CD8-positive, alpha-beta T cell (primary cell): ENCODE measurements at regions of chr7 and their contacts with region 1.

Region 1: GRCh38 chr7:143901668-143902331 is at the start of gene TCAF1:
- DNase-seq: peak; percentile 70 to 94 (median 88)
- ATAC-seq: peak; percentile 92
- H3K4me3 ChIP-seq: peak within 1 kb of the TSS; percentile 83 to 92
- H3K4me3 Mint-ChIP-seq: peak within 1 kb of the TSS; percentile 90
- H3K27ac ChIP-seq: peak within 1 kb of the TSS; percentile 65 to 67
- H3K27ac Mint-ChIP-seq: peak within 1 kb of the TSS; percentile 94
- H3K4me1 ChIP-seq: peaks cover 19% of the 10 kb centered on the region
- H3K4me1 Mint-ChIP-seq: peaks cover 45% of the 10 kb centered on the region
- H3K27me3 ChIP-seq: no peaks in the 10 kb centered on the region
- H3K27me3 Mint-ChIP-seq: no peaks in the 10 kb centered on the region
- CTCF ChIP-seq: no peak
- total RNA-seq, gene TCAF1: 4.8 to 5.0 TPM

Region 2: GRCh38 chr7:143733876-143734275 is 167.9 kb before region 1 on chr7:
- CTCF ChIA-PET with region 1: no interaction called
- POLR2A ChIA-PET with region 1: no interaction called
- intact Hi-C with region 1: loop called (anchors 5 kb)
- DNase-seq: no peak
- ATAC-seq: no peak
- H3K4me3 ChIP-seq: no peak overlapping the region
- H3K4me3 Mint-ChIP-seq: no peak overlapping the region
- H3K27ac ChIP-seq: no peak overlapping the region
- H3K27ac Mint-ChIP-seq: no peak overlapping the region
- H3K4me1 ChIP-seq: no peaks in the 10 kb centered on the region
- H3K4me1 Mint-ChIP-seq: peaks cover 6% of the 10 kb centered on the region
- H3K27me3 ChIP-seq: no peaks in the 10 kb centered on the region
- H3K27me3 Mint-ChIP-seq: no peaks in the 10 kb centered on the region
- CTCF ChIP-seq: no peak

Region 3: DNA sequence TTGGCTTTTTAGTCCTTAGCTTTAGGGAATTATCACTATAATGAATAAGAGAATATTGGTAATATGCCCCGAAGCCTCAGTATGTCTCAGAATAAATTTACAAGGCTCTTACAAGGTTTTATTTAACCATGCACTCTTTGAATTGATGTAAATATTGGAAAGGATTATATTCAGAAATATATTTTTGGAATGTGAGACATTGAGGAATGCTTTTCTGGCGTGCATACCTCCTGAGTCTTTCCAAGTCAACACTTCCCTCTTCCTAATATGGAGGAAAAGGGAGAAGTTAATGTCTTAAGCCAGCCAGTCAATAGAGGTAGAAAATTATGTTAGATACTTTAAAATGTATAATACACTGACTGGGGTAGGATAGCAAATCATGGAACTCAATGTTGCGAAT is 51.6 kb after region 1 on chr7:
- CTCF ChIA-PET with region 1: no interaction called
- POLR2A ChIA-PET with region 1: no interaction called
- intact Hi-C with region 1: no loop called
- DNase-seq: no peak
- ATAC-seq: no peak
- H3K4me3 ChIP-seq: no peak overlapping the region
- H3K4me3 Mint-ChIP-seq: no peak overlapping the region
- H3K27ac ChIP-seq: no peak overlapping the region
- H3K27ac Mint-ChIP-seq: no peak overlapping the region
- H3K4me1 ChIP-seq: no peaks in the 10 kb centered on the region
- H3K4me1 Mint-ChIP-seq: no peaks in the 10 kb centered on the region
- H3K27me3 ChIP-seq: peaks cover 0 to 2% of the 10 kb centered on the region in 2 experiments
- H3K27me3 Mint-ChIP-seq: peaks cover 28% of the 10 kb centered on the region
- CTCF ChIP-seq: no peak

Region 4: GRCh38 chr7:144001543-144001942 is 99.7 kb after region 1 on chr7:
- CTCF ChIA-PET with region 1: no interaction called
- POLR2A ChIA-PET with region 1: no interaction called
- intact Hi-C with region 1: no loop called
- DNase-seq: no peak
- ATAC-seq: no peak
- H3K4me3 ChIP-seq: no peak overlapping the region
- H3K4me3 Mint-ChIP-seq: no peak overlapping the region
- H3K27ac ChIP-seq: no peak overlapping the region
- H3K27ac Mint-ChIP-seq: no peak overlapping the region
- H3K4me1 ChIP-seq: no peaks in the 10 kb centered on the region
- H3K4me1 Mint-ChIP-seq: no peaks in the 10 kb centered on the region
- H3K27me3 ChIP-seq: no peaks in the 10 kb centered on the region
- H3K27me3 Mint-ChIP-seq: peaks cover 12% of the 10 kb centered on the region
- CTCF ChIP-seq: no peak